ENCODE measurements at regions of chr2 and their contacts with region 1.

Region 1: GRCh38 chr2:33126958-33127357 is 180.2 kb downstream of the LTBP1 start:
- DNase-seq: no peak
- H3K4me3 ChIP-seq: no peak overlapping the region
- H3K27ac ChIP-seq: no peak overlapping the region
- H3K4me1 ChIP-seq: peaks cover 0 to 25% (median 21%) of the 10 kb centered on the region in 4 donors
- H3K27me3 ChIP-seq: no peaks in the 10 kb centered on the region
- CTCF ChIP-seq: no peak
- EP300 ChIP-seq: no peak
- POLR2A ChIP-seq: no peak

Region 2: DNA sequence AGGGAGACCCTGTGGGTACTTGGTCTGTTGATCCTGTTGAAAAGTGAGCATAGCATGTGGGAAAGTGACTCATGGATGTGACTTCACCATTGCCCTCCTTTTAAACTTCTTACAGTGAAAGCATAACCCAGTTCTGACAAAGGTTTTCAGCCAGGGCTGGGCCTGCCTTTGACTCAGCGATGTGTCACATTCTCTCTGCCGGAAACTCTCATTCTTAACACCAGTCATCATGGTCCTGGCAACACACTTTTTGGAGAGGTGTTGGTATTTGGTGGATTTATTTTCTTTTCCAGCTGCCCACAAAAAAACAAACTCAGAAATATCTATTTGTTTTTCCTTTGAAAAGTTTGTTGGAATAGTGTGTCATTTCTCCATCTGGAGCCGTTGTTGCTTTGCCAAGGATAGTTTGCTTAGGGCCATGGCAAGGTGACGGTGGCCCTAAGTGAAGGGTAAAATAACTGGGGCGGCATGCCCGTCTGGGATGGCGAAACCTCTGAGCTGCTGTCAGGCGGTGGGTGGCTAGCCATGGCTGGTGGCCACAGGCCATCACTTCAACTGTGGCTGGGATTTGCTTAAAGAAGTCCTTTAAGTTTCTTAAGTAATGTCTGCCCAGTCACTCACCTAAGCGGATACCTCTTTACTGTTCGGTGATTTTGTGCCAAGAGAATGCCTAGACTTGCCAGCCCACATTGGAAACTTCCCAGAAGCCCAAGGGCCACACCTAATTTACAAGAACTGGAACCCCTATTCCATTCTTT is 56.9 kb before region 1 on chr2:
- intact Hi-C with region 1: loop called (anchors 5 kb)
- DNase-seq: no peak
- H3K4me3 ChIP-seq: no peak overlapping the region
- H3K27ac ChIP-seq: peak overlapping the region; percentile 58 to 69 (median 66)
- H3K4me1 ChIP-seq: peaks cover 19 to 38% (median 29%) of the 10 kb centered on the region in 4 donors
- H3K27me3 ChIP-seq: no peaks in the 10 kb centered on the region
- CTCF ChIP-seq: no peak
- EP300 ChIP-seq: no peak
- POLR2A ChIP-seq: no peak